Dorsolateral prefrontal cortex (tissue), 120 donors: ENCODE measurements at regions of chr3 and their contacts with region 1.

Region 1: DNA sequence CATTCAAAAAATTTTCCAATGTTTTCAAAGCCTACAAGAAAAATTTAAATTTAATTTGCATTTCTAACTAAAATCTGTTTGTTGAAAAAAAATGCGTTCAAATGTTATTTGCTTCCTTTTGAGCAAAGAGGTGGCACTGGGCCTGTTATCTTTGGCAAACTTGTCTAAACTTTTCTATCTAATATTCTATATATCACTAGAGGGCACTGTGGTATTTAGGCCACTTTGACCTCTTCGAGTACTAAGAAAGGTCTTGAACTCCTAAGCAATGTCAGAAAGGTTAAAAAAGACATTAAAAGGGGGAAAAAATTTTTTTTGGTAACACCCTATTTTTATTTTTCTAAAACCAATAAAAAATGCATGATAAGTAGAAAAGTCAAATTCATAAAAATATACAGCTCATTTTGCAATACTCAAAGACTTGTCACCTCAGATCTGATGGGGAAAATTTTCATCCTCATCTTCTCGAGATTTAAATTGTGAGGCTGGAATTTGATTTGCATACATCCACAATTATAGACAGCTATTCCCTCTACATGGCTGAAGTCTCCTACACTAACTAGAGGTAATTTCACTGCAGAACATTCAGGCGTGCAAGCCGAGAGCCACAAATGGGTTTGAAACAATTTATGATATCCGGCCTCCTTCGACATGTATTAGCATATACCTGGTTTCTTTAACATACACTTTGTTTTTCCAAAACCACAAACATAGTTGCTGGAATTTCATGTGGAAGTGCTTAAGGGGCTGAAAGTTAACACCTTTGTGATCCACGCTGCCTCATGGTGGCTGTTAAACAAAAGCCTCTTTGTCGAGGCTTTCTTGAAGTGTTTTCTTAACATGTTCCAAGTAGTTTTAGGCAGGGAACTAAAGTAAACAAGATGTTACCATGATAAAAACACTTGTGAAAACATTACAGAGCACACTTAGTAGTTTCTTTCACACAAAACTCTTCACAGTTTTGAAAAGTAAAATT is 576.4 kb downstream of the FOXP1 start:
- DNase-seq: no peak
- H3K4me3 ChIP-seq: peak overlapping the region in 2 of 59 donors; percentile 31 to 43
- H3K27ac ChIP-seq: peak overlapping the region in 35 of 59 donors; percentile 7 to 66 (median 49)
- H3K27me3 ChIP-seq: no peaks in the 10 kb centered on the region
- CTCF ChIP-seq: peak in 55 of 56 donors; percentile 42 to 88 (median 63)

Region 2: DNA sequence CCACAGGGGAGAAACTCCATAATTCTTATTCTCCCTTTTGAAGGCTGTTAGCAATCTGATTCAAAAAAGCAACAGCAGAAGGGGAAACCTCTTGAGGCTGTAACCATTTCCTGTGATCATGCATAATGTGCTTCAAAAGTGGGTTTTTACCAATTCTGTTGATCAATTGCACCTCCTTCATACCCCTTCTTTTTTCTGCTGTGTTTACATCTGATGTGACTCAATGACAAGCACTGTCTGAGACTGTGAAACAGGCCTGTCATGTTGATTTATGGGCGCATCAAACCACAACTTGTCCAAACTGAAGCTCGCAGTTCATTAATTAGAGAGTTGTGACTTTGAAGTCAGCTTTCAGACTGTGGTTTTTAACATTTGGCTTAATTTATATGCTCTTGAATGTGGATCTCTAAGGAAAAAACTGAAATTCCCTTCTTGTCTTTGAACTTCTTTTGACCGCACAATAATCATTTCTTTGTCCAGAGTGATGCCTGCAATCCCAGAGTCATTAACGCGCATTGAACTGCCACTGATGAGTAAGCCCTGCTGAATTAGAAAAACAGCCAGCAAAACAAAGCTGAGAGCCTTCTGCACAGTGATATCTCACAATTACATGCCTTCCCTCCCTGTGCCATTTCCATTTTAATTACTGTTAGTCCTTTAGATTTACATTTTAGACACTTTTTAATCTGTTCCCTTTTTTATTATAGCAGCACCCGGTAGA is 43.6 kb after region 1 on chr3:
- intact Hi-C with region 1: loop called in 1 of 2 experiments (anchors 5 kb)
- DNase-seq: peak in 1 of 10 donors; percentile 58
- H3K4me3 ChIP-seq: peak overlapping the region in 13 of 59 donors; percentile 3 to 38 (median 14)
- H3K27ac ChIP-seq: peak overlapping the region; percentile 43 to 98 (median 92)
- H3K27me3 ChIP-seq: no peaks in the 10 kb centered on the region
- CTCF ChIP-seq: peak in 1 of 56 donors; percentile 14

Region 3: GRCh38 chr3:71064288-71064955 is 57.3 kb after region 1 on chr3:
- intact Hi-C with region 1: loop called (anchors 2 to 5 kb)
- DNase-seq: peak in 2 of 10 donors; percentile 31 to 65
- H3K4me3 ChIP-seq: peak overlapping the region; percentile 44 to 85 (median 74)
- H3K27ac ChIP-seq: peak overlapping the region; percentile 48 to 96 (median 87)
- H3K27me3 ChIP-seq: no peaks in the 10 kb centered on the region
- CTCF ChIP-seq: peak in 1 of 56 donors; percentile 19

Region 4: GRCh38 chr3:71160800-71161546 is 153.9 kb after region 1 on chr3:
- intact Hi-C with region 1: no loop called
- DNase-seq: no peak
- H3K4me3 ChIP-seq: no peak overlapping the region
- H3K27ac ChIP-seq: no peak overlapping the region
- H3K27me3 ChIP-seq: no peaks in the 10 kb centered on the region
- CTCF ChIP-seq: no peak

Region 5: DNA sequence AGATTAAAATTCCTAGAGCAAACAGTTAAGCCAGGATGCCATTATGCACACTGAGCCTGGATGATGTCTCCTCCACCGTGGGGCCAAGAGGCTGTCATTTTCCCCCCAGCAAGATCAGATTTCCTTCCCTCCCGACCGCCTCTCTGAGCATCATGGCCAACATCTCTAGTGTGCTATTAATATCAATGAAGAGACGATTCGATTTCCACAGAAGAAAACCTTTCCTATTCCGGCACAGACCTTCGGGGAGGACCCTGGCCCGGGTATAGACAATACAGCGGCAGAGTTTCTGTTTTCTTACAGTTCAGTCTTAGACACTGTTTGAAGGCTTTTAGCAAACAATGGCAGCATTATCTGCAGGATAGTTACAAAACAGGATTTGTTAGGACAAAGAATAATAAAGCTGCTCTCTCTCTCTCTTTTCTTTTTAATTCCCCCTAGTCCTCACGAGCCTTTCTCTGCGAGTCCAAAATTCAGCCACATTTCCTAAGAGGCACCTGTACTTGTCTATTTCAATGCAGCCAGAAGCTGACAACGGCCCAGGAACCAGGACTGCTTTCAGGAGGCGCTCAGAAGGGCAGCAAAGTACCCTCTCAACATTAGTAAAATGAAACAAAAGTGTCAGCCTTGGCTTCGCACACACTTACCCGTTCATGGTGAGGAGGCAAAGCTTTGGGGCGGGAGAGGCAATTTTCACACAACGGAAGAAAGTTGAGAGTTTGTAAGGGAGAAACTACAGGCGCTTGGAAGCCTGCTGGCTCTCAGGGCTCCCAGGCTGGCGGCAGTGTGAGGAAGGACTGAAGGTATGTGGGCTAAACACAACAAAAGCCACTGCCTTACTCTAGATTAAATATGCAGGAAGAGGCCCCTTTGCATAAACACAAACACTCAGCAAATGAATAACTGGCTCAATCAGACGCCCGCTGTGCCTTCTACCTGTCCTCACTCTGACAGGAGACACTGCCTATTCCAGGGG is 298.4 kb after region 1 on chr3:
- intact Hi-C with region 1: loop called (anchors 5 to 10 kb)
- DNase-seq: peak in 1 of 10 donors; percentile 44
- H3K4me3 ChIP-seq: peak overlapping the region; percentile 18 to 72 (median 54)
- H3K27ac ChIP-seq: peak overlapping the region; percentile 19 to 96 (median 87)
- H3K27me3 ChIP-seq: no peaks in the 10 kb centered on the region
- CTCF ChIP-seq: peak in 2 of 56 donors; percentile 3 to 12

Region 6: GRCh38 chr3:71428841-71429596 is 421.9 kb after region 1 on chr3:
- intact Hi-C with region 1: no loop called
- DNase-seq: no peak
- H3K4me3 ChIP-seq: peak overlapping the region in 25 of 59 donors; percentile 0 to 31 (median 16)
- H3K27ac ChIP-seq: peak overlapping the region in 7 of 59 donors; percentile 0 to 53 (median 31)
- H3K27me3 ChIP-seq: no peaks in the 10 kb centered on the region
- CTCF ChIP-seq: no peak

Region 7: GRCh38 chr3:71652781-71653413 is 645.8 kb after region 1 on chr3:
- intact Hi-C with region 1: loop called in 1 of 2 experiments (anchors 5 kb)
- DNase-seq: peak in 7 of 10 donors; percentile 19 to 58 (median 46)
- H3K4me3 ChIP-seq: peak overlapping the region in 15 of 59 donors; percentile 1 to 48 (median 26)
- H3K27ac ChIP-seq: peak overlapping the region in 25 of 59 donors; percentile 2 to 59 (median 26)
- H3K27me3 ChIP-seq: no peaks in the 10 kb centered on the region
- CTCF ChIP-seq: peak; percentile 23 to 89 (median 68)